Heart left ventricle (tissue), 16 donors: ENCODE measurements at regions of chr1 and their contacts with region 1.

Region 1: GRCh38 chr1:46303038-46303871 is at the starts of genes LRRC41 and UQCRH:
- DNase-seq: peak; percentile 95 to 96 (median 96)
- ATAC-seq: peak; percentile 88 to 94 (median 93)
- H3K4me3 ChIP-seq: peak within 1 kb of the TSS; percentile 73 to 98 (median 90)
- H3K27ac ChIP-seq: peak within 1 kb of the TSS; percentile 93 to 100 (median 98)
- H3K4me1 ChIP-seq: peaks cover 8 to 76% (median 59%) of the 10 kb centered on the region in 12 donors
- H3K27me3 ChIP-seq: no peaks in the 10 kb centered on the region
- CTCF ChIP-seq: peak in 2 of 12 donors; percentile 1 to 6
- POLR2A ChIP-seq: peak; percentile 14 to 44
- total RNA-seq, gene LRRC41: 34.7 to 60.5 (median 45.8) TPM
- total RNA-seq, gene UQCRH: 622 to 2,380 (median 940) TPM

Region 2: DNA sequence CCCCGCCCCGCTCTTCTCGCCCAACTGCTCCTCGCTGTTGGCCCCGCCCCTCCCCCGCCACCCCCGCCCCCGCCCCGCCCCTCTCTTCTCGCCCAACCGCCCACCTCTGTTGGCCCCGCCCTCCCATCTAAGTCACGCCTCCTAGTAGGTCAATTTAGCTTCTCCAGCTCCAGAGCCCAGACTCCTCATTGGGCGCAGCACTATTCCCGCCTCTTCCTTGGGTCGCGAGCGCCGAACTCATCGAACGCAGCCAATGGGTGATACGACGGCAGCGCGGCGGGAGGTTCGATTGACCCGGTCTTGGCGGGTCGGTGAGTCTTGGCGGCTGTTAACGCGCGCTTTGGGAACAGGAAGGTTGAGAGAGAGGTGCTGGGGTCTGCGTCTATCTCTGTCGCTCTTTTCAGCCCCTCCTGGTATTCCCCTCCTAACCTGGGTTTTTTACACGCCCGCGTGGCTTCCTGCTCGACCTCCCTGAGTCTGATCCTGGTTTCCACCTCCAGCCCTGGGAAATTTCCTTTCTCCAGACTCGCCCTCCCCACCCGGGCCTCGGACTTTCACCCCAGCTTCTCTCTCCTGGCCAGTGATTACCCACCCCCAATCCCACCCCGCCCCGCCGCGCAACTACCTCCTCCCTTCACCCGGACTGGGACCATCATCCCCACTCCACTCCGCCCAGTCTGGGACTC is 55.7 kb before region 1 on chr1 and contains the start of gene RAD54L:
- intact Hi-C with region 1: loop called in 4 of 10 experiments (anchors 2 to 10 kb)
- DNase-seq: peak; percentile 98 to 99 (median 98)
- ATAC-seq: peak; percentile 95 to 97 (median 96)
- H3K4me3 ChIP-seq: peak within 1 kb of the TSS; percentile 41 to 81 (median 69)
- H3K27ac ChIP-seq: peak within 1 kb of the TSS; percentile 53 to 95 (median 82)
- H3K4me1 ChIP-seq: peaks cover 0 to 18% (median 7%) of the 10 kb centered on the region in 12 donors
- H3K27me3 ChIP-seq: no peaks in the 10 kb centered on the region
- CTCF ChIP-seq: no peak
- POLR2A ChIP-seq: no peak
- total RNA-seq, gene RAD54L: 0.44 to 4.0 (median 0.87) TPM in 8 of 9 donors, not detected in the other

Region 3: GRCh38 chr1:46254668-46255067 is 48.6 kb before region 1 on chr1:
- intact Hi-C with region 1: loop called in 3 of 10 experiments (anchors 5 to 10 kb)
- DNase-seq: no peak
- ATAC-seq: no peak
- H3K4me3 ChIP-seq: no peak overlapping the region
- H3K27ac ChIP-seq: no peak overlapping the region
- H3K4me1 ChIP-seq: no peaks in the 10 kb centered on the region
- H3K27me3 ChIP-seq: no peaks in the 10 kb centered on the region
- CTCF ChIP-seq: no peak
- POLR2A ChIP-seq: no peak